Activated naive CD4-positive, alpha-beta T cell treated with anti-CD3 and anti-CD28 coated beads for 36 hours (primary cell): ENCODE measurements at regions of chr2 and their contacts with region 1.

Region 1: GRCh38 chr2:189287982-189288521 is 108.5 kb upstream of the COL5A2 start:
- DNase-seq: no peak
- H3K4me3 Mint-ChIP-seq: no peak overlapping the region
- H3K27ac Mint-ChIP-seq: peak overlapping the region; percentile 80
- H3K4me1 Mint-ChIP-seq: peaks cover 66% of the 10 kb centered on the region
- H3K27me3 Mint-ChIP-seq: no peaks in the 10 kb centered on the region

Region 2: GRCh38 chr2:187581125-187581896 is 1706.7 kb before region 1 on chr2:
- CTCF ChIA-PET with region 1: no interaction called
- intact Hi-C with region 1: loop called (anchors 2 kb)
- DNase-seq: peak; percentile 39
- H3K4me3 Mint-ChIP-seq: no peak overlapping the region
- H3K27ac Mint-ChIP-seq: no peak overlapping the region
- H3K4me1 Mint-ChIP-seq: peaks cover 6% of the 10 kb centered on the region
- H3K27me3 Mint-ChIP-seq: peaks cover 11% of the 10 kb centered on the region

Region 3: DNA sequence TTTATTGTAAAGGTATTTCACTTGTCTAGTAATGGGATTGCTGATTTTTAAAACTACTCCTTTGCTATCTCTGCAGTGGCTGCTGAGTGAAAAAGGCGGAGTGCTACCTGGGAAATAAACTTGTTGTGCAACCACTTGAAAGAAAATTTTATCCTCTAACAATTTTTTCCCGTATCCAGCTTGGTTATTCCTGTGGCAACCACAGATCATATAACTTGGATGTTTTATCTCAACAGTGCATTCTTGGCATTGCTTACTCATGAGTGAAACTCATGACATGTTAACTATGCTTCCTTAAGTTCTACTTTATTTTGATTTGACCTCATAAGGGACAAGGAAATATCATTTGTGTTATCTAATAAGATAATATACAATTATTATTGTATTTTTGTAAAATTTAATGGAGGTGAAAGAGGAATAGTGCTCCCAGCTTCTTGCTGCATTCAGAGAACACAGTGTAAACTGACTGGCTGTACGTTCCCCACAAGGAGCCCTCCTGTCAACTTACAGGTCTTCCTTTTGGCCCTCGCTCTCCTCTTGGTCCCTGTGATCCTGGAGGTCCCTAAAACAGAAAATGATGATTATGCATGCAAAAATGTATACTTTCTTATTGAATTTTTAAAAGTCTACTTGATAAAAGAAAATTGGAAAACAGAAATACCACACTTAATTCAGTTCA is 191.1 kb before region 1 on chr2:
- CTCF ChIA-PET with region 1: interaction called, 16 read pairs
- intact Hi-C with region 1: loop called (anchors 1 kb)
- DNase-seq: no peak
- H3K4me3 Mint-ChIP-seq: no peak overlapping the region
- H3K27ac Mint-ChIP-seq: no peak overlapping the region
- H3K4me1 Mint-ChIP-seq: no peaks in the 10 kb centered on the region
- H3K27me3 Mint-ChIP-seq: no peaks in the 10 kb centered on the region

Region 4: GRCh38 chr2:189254268-189254883 is 33.7 kb before region 1 on chr2:
- CTCF ChIA-PET with region 1: no interaction called
- intact Hi-C with region 1: loop called (anchors 1 kb)
- DNase-seq: no peak
- H3K4me3 Mint-ChIP-seq: no peak overlapping the region
- H3K27ac Mint-ChIP-seq: no peak overlapping the region
- H3K4me1 Mint-ChIP-seq: peaks cover 38% of the 10 kb centered on the region
- H3K27me3 Mint-ChIP-seq: no peaks in the 10 kb centered on the region

Region 5: DNA sequence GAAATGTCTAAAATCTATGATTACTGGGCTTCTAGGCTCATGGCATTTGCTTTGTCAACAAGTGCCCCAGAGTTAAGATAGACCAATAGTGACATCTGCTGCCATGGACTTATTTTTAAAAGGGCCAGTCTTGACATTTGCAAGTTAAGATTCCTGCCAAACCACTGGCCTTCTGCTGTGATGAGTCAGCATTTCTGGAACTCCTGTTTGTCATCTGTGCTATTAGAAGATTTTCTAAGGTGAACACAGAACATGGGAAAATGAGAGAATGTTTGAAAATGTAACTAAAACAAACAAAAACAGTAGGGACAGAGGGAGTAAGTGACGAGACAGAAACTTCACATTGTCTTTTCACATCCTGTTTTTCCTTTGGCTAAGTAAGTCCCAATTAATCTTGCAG is 59.5 kb after region 1 on chr2:
- CTCF ChIA-PET with region 1: interaction called, 4 read pairs
- intact Hi-C with region 1: loop called (anchors 1 kb)
- DNase-seq: peak; percentile 28
- H3K4me3 Mint-ChIP-seq: no peak overlapping the region
- H3K27ac Mint-ChIP-seq: no peak overlapping the region
- H3K4me1 Mint-ChIP-seq: peaks cover 17% of the 10 kb centered on the region
- H3K27me3 Mint-ChIP-seq: no peaks in the 10 kb centered on the region

Region 6: GRCh38 chr2:189783927-189784867 is 496.1 kb after region 1 on chr2 and contains the starts of genes ORMDL1 and PMS1:
- CTCF ChIA-PET with region 1: no interaction called
- intact Hi-C with region 1: loop called (anchors 5 kb)
- DNase-seq: peak; percentile 93
- H3K4me3 Mint-ChIP-seq: peak within 1 kb of the TSS; percentile 93
- H3K27ac Mint-ChIP-seq: peak within 1 kb of the TSS; percentile 92
- H3K4me1 Mint-ChIP-seq: peaks cover 51% of the 10 kb centered on the region
- H3K27me3 Mint-ChIP-seq: no peaks in the 10 kb centered on the region
- total RNA-seq, gene ORMDL1: 34.6 to 37.3 TPM
- total RNA-seq, gene PMS1: 29.7 to 32.5 TPM